ENCODE measurements at regions of chr12 and their contacts with region 1.

Region 1: DNA sequence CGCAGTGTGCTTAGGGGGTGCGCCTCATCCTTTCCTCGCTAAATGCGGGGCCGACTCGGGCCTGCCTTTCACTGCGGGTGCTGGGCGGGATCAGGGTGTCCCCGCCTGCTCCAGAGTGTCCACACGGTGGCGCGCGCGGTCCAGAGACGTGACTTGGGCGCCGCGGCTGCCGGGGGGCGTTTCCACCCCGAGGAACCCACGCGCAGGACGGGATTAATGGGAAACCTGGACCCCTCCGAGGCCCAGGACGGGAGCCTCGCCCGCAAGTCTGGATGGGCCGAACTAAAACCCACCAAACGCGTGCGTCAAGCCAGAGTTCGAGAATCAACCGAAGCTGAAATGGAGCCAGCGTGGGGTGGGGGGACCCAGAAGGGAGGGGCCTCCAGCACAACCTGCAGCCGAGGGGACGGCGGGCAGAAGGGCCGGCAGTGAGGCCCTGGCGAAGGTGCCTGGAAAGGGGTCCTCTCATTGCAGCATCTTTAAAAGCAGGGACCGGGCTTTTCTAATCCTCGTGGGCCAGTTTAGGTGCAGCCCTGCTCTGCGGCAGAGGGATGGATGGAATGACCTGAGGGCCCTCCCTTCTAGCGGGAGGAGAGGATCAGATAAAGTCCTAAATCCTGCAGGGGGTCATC is 93.3 kb downstream of the NINJ2 start:
- DNase-seq: peak; percentile 90 to 97
- H3K4me3 ChIP-seq: peak overlapping the region; percentile 80
- H3K4me3 Mint-ChIP-seq: peak overlapping the region; percentile 80
- H3K27ac Mint-ChIP-seq: peak overlapping the region; percentile 81
- H3K4me1 ChIP-seq: peaks cover 35% of the 10 kb centered on the region
- H3K4me1 Mint-ChIP-seq: peaks cover 35% of the 10 kb centered on the region
- H3K27me3 ChIP-seq: no peaks in the 10 kb centered on the region
- H3K27me3 Mint-ChIP-seq: no peaks in the 10 kb centered on the region
- CTCF ChIP-seq: peak; percentile 98 to 99

Region 2: DNA sequence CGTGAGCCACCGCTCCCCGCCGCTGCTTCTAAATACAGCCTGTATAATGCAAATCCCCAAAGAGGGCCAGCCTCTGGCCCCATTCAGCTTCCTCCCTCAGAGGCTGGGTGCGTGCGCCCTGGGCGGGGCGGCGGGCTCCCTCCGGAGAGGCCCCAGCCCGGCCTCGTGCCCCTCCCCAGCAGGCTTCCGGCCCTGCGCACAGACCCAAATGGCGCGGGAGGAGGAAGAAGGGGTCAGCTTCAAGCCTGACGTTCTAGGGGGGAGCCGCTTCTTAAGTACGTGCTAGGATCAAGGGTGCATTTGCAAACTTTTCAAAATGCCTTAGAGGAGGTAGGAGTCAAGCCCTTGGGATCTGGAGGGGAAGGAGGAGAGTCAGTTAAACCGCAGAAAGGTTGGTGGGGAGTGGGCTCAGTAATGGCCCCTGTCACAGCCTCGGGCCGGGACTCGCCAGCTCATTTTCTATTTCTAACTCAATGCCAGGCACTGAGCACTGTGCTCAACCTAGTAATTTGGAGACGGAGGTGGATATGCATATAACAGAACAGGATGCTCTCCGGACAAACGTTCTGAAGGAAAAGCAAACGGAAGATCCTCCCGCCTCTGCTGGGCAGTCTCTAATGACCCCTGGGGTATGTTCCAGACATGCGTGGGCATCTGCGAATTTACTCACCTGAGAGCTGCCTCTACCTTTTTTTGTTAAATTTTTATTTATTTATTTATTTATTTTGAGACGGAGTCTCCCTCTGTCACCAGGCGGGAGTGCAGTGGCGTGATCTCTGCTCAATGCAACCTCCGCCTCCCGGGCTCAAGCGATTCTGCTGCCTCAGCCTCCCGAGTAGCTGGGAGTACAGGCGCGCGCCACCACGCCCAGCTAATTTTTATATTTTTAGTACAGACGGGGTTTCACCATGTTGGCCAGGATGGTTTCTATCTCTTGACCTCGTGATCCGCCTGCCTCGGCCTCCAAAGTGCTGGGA is 61.0 kb after region 1 on chr12:
- CTCF ChIA-PET with region 1: interaction called, 5 read pairs
- POLR2A ChIA-PET with region 1: interaction called, 15 read pairs
- intact Hi-C with region 1: loop called (anchors 1 kb)
- DNase-seq: no peak
- H3K4me3 ChIP-seq: no peak overlapping the region
- H3K4me3 Mint-ChIP-seq: peak overlapping the region; percentile 56
- H3K27ac Mint-ChIP-seq: peak overlapping the region; percentile 88
- H3K4me1 ChIP-seq: peaks cover 67% of the 10 kb centered on the region
- H3K4me1 Mint-ChIP-seq: peaks cover 57% of the 10 kb centered on the region
- H3K27me3 ChIP-seq: no peaks in the 10 kb centered on the region
- H3K27me3 Mint-ChIP-seq: no peaks in the 10 kb centered on the region
- CTCF ChIP-seq: no peak

Region 3: DNA sequence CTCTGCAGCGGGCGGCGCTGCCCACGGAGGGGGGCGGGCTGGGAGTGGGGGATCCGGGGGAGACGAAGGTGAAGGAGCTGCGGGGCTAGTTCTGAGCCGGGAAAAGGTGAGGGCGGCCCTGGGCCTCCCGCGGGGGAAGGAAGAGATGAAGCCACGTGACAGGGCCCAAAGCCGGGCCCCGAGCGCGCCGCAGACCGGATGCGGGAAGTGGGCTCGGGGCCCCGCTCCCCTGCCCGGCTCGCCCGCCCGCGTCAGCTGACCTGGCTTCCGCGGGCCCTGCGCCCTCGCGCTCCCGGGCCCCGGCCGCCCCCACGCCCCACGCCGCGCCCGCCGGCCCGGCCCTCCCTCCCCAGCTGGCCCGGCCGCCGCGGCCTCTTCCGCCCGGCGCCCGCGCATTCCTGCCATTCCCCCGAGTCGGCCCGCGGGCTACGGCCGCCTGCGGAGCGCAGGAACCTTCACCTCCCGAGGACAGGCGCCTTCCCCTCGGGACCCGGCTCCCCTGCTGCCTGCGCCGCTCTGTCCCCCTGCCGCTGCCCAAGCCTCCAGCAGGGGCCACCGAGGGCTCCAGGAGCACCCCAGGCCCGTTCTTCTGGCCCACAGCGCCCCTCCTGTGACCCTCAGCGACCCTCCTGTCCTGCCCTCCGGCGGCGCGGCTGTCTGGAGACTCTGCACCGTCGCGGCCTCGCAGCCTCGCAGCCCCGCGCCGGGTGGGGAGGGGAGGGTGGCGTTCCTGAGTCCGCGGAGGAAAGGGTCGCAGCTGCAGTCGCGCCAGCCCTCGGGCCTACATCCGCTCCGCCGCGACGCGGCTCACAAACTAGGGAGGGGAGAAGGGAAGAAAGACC is 72.9 kb after region 1 on chr12:
- CTCF ChIA-PET with region 1: interaction called, 11 read pairs
- POLR2A ChIA-PET with region 1: interaction called, 11 read pairs
- intact Hi-C with region 1: no loop called
- DNase-seq: peak; percentile 90 to 93
- H3K4me3 ChIP-seq: peak overlapping the region; percentile 56
- H3K4me3 Mint-ChIP-seq: peak overlapping the region; percentile 78
- H3K27ac Mint-ChIP-seq: peak overlapping the region; percentile 62
- H3K4me1 ChIP-seq: peaks cover 20% of the 10 kb centered on the region
- H3K4me1 Mint-ChIP-seq: peaks cover 34% of the 10 kb centered on the region
- H3K27me3 ChIP-seq: no peaks in the 10 kb centered on the region
- H3K27me3 Mint-ChIP-seq: no peaks in the 10 kb centered on the region
- CTCF ChIP-seq: peak; percentile 74 to 89

Region 4: GRCh38 chr12:810671-811415 is 240.9 kb after region 1 on chr12:
- CTCF ChIA-PET with region 1: interaction called, 14 read pairs
- POLR2A ChIA-PET with region 1: no interaction called
- intact Hi-C with region 1: loop called (anchors 1 kb)
- DNase-seq: no peak
- H3K4me3 ChIP-seq: no peak overlapping the region
- H3K4me3 Mint-ChIP-seq: no peak overlapping the region
- H3K27ac Mint-ChIP-seq: no peak overlapping the region
- H3K4me1 ChIP-seq: peaks cover 9% of the 10 kb centered on the region
- H3K4me1 Mint-ChIP-seq: peaks cover 17% of the 10 kb centered on the region
- H3K27me3 ChIP-seq: no peaks in the 10 kb centered on the region
- H3K27me3 Mint-ChIP-seq: no peaks in the 10 kb centered on the region
- CTCF ChIP-seq: no peak

Region 5: GRCh38 chr12:990661-991349 is 420.9 kb after region 1 on chr12 and contains the start of gene ERC1:
- CTCF ChIA-PET with region 1: no interaction called
- POLR2A ChIA-PET with region 1: no interaction called
- intact Hi-C with region 1: loop called (anchors 2 kb)
- DNase-seq: peak; percentile 93 to 97
- H3K4me3 ChIP-seq: peak within 1 kb of the TSS; percentile 80
- H3K4me3 Mint-ChIP-seq: peak within 1 kb of the TSS; percentile 84
- H3K27ac Mint-ChIP-seq: peak within 1 kb of the TSS; percentile 91
- H3K4me1 ChIP-seq: peaks cover 26% of the 10 kb centered on the region
- H3K4me1 Mint-ChIP-seq: peaks cover 40% of the 10 kb centered on the region
- H3K27me3 ChIP-seq: no peaks in the 10 kb centered on the region
- H3K27me3 Mint-ChIP-seq: no peaks in the 10 kb centered on the region
- CTCF ChIP-seq: peak in 1 of 2 experiments; percentile 9
- total RNA-seq, gene ERC1: 88.4 and 111 TPM in 2 replicates